Ascending aorta (tissue), 2 donors: ENCODE measurements at regions of chr20 and their contacts with region 1.

Region 1: DNA sequence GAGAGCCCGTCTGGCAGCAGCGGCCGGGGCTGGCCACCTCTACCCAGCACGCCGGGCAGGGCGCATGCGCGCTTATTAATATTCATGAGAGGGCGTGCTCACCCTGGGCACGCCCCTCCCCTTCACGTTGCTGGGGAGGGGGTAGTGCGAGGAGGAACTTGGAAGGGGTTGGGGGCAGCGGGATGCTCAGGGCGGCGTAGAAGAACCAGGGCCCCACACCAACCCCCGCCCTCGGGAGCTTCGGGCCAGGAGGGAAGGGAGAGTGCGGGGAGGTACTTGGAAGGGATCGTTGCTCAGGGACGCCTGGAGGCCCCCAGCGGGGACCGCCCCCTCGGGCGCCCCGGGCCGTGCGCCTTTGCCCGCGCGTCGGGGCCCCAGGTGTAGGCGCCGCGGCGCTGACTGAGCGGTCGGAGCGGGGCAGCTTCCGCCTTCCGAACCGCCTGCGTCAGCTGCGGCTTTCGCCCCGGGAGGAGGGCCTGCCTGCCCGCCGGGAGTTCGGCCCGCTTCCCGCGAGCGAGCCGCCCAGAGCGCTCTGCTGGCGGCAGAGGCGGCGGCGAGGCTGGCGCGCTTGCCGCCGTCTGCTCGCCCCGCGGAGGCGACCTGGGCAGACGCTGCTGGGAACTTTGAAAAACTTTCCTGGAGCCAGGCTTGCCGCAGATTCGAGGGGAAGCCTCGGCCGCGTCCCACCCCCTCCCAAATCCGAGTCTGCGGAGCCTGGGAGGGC is at the start of gene JAG1:
- DNase-seq: peak; percentile 82 to 98
- H3K4me3 ChIP-seq: peak within 1 kb of the TSS; percentile 86 to 90
- H3K27ac ChIP-seq: peak within 1 kb of the TSS; percentile 100
- H3K4me1 ChIP-seq: peaks cover 0 to 9% of the 10 kb centered on the region in 2 donors
- H3K27me3 ChIP-seq: no peaks in the 10 kb centered on the region
- CTCF ChIP-seq: no peak
- total RNA-seq, gene JAG1: 101 TPM

Region 2: DNA sequence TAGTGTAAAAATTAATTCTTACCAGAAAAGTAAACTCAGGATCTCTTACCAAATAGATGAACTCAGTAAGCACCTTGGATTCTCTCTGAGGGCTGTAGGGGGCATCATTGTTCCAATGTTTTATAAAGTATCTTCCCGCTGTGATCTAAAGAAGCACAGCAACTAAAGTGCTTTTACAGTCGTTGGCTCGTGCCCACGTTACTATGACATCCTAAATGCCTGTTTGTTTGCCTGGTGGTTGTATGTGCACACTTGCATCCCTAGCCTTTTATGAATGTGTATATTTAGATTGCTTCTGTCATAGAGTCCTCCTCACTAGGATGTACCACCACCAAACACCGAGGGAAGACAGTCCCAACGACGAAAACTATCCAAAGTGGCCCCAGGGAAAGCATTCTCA is 204.6 kb before region 1 on chr20:
- intact Hi-C with region 1: loop called (anchors 2 kb)
- DNase-seq: peak in 1 of 2 donors; percentile 84
- H3K4me3 ChIP-seq: peak overlapping the region in 1 of 2 donors; percentile 26
- H3K27ac ChIP-seq: no peak overlapping the region
- H3K4me1 ChIP-seq: peaks cover 4 to 44% of the 10 kb centered on the region in 2 donors
- H3K27me3 ChIP-seq: no peaks in the 10 kb centered on the region
- CTCF ChIP-seq: peak; percentile 57 to 68 (median 64)

Region 3: DNA sequence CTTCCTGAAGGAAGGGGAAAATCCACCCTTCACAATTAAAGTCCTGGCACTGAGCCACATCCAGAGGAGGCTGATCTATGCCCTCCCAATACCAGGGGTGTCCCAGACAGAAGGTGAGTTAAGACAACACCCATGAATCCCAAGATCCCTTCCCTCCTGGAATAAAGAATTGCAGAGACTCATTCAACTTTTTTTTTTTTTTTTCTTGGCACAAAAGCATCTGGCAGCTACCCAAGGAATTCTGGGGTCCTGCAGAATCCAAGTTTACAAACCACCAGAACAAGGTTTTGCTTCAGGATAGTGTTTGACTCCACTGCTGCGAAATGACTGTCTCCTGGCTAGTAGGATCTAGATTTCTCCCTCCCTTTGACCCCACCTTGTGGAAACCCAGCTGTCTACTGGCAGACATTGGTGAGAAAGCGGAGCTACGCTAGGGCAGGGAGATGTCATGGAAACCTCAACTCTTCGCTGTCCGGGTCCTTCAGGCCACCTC is 37.8 kb before region 1 on chr20:
- intact Hi-C with region 1: loop called (anchors 5 kb)
- DNase-seq: peak in 1 of 2 donors; percentile 68
- H3K4me3 ChIP-seq: peak overlapping the region in 1 of 2 donors; percentile 53
- H3K27ac ChIP-seq: peak overlapping the region; percentile 93 to 100
- H3K4me1 ChIP-seq: peaks cover 29 to 57% of the 10 kb centered on the region in 2 donors
- H3K27me3 ChIP-seq: no peaks in the 10 kb centered on the region
- CTCF ChIP-seq: no peak

Region 4: DNA sequence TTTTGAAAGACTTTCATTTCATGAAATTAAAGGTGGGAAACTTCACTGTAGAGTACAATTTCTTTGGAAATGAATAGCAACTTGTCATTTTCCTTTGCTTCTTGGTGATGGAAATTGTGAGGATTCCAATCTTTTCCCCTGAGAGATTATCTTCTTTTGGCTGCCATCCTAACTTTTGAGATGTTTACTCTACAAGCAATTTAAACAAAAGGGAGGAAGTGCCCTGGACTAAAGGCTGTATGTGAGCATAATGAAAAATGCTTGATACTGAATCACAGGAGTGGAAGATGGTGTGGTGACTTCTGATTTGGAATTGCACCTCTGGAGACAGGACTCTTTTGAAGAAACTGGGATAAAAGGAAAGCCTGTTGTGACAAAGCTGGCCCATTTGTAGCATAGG is 42.7 kb after region 1 on chr20:
- intact Hi-C with region 1: no loop called
- DNase-seq: no peak
- H3K4me3 ChIP-seq: no peak overlapping the region
- H3K27ac ChIP-seq: no peak overlapping the region
- H3K4me1 ChIP-seq: peaks cover 2 to 17% of the 10 kb centered on the region in 2 donors
- H3K27me3 ChIP-seq: no peaks in the 10 kb centered on the region
- CTCF ChIP-seq: no peak

Region 5: DNA sequence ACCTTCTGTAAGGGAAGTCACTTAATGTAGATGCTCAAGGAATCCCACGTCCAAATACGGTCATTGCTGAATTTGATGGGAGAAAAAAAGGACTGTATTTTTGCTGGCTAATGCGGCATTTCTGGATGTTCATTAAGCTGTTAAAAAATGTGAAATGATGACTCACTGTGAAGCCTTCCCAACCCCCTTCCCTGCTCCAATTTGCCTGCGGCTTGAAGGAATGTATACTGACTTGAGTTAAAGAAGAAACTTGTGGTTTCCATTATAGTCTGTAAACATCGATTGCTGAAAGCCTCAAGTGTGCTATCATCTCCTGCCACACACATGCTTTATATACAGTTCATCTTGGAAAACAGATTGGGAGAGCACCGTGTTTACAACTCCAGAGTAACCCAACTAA is 248.8 kb after region 1 on chr20:
- intact Hi-C with region 1: loop called (anchors 5 kb)
- DNase-seq: no peak
- H3K4me3 ChIP-seq: no peak overlapping the region
- H3K27ac ChIP-seq: peak overlapping the region in 1 of 2 donors; percentile 31
- H3K4me1 ChIP-seq: peaks cover 0 to 16% of the 10 kb centered on the region in 2 donors
- H3K27me3 ChIP-seq: no peaks in the 10 kb centered on the region
- CTCF ChIP-seq: no peak

Region 6: GRCh38 chr20:11204926-11205768 is 531.0 kb after region 1 on chr20:
- intact Hi-C with region 1: loop called (anchors 2 kb)
- DNase-seq: peak in 1 of 2 donors; percentile 68
- H3K4me3 ChIP-seq: no peak overlapping the region
- H3K27ac ChIP-seq: peak overlapping the region; percentile 3 to 38
- H3K4me1 ChIP-seq: peaks cover 0 to 10% of the 10 kb centered on the region in 2 donors
- H3K27me3 ChIP-seq: no peaks in the 10 kb centered on the region
- CTCF ChIP-seq: peak; percentile 59 to 72 (median 59)